Aorta (tissue), 5 donors: ENCODE measurements at regions of chr6 and their contacts with region 1.

Region 1: DNA sequence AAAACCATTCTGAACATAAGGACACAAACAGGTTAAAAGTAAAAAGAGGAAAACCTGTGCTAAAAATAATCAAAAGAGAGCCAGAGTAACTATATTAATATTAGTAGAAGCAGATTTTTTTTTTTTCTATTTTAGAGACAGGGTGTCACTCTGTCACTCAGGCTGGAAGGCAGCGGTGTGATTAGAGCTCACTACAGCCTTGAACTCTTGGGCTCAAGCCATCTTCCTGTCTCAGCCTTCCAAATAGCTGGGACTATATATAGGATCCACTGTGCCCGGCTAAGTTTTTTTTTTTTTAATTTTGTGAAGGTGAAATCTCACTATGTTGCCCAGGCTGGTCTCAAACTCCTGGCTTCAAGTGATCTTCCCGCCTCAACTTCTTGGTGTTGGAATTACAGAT is 33.4 kb upstream of the PLN start:
- DNase-seq: no peak
- ATAC-seq: peak; percentile 68
- H3K4me3 ChIP-seq: no peak overlapping the region
- H3K27ac ChIP-seq: peak overlapping the region in 1 of 2 donors; percentile 76
- H3K4me1 ChIP-seq: peaks cover 0 to 3% of the 10 kb centered on the region in 2 donors
- H3K27me3 ChIP-seq: no peaks in the 10 kb centered on the region

Region 2: DNA sequence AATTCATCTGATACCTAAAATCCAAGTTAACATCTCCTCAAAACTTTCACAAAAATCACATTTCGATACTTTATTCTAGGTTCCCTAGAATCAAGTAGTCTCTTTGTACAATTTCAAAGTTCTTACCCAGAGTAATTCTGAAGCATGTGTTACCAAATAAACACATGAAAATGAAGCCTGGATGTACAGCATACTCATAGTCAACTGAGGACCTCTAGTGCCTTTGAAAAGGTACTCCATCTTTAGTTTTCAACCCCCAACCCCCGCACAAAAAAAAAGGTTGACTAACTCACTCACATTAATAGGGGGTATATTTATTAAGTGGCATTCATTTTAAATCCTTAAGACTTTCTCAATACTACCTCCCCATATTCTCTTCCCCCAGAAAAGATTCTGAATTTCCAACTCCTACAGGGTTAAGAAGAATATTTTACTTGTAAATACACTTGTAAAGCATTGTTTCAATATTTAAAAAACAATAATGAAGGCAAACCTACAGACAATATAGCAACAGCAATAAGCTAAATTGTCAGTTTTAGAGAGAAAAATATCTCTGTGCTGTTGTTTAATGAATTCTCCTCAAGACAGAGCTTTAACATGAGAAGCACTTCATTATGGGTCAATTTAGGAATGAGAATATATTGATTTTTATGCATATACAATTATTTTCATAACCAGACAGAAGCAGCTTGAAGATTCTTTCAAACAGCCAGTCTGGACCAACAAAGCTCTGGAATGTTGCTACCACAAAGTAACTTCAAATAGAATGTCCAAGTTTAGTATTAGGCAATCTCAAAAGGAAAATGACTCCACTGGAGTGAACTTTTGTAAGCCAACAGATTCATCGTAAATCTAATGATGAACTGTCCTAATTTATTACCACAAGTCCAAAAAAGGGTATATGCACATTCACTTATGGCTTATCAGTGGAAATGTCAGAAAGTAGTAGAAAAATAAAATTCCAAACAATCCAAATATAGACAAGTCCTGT is 36.7 kb after region 1 on chr6:
- intact Hi-C with region 1: loop called (anchors 5 kb)
- DNase-seq: no peak
- ATAC-seq: peak; percentile 67
- H3K4me3 ChIP-seq: peak overlapping the region; percentile 93 to 98
- H3K27ac ChIP-seq: no peak overlapping the region
- H3K4me1 ChIP-seq: no peaks in the 10 kb centered on the region
- H3K27me3 ChIP-seq: no peaks in the 10 kb centered on the region

Region 3: GRCh38 chr6:118558464-118559217 is 44.0 kb after region 1 on chr6:
- intact Hi-C with region 1: loop called (anchors 5 kb)
- DNase-seq: no peak
- ATAC-seq: no peak
- H3K4me3 ChIP-seq: peak overlapping the region; percentile 8 to 34
- H3K27ac ChIP-seq: no peak overlapping the region
- H3K4me1 ChIP-seq: no peaks in the 10 kb centered on the region
- H3K27me3 ChIP-seq: no peaks in the 10 kb centered on the region

Region 4: GRCh38 chr6:118639054-118639964 is 124.6 kb after region 1 on chr6:
- intact Hi-C with region 1: no loop called
- DNase-seq: no peak
- ATAC-seq: no peak
- H3K4me3 ChIP-seq: no peak overlapping the region
- H3K27ac ChIP-seq: no peak overlapping the region
- H3K4me1 ChIP-seq: no peaks in the 10 kb centered on the region
- H3K27me3 ChIP-seq: no peaks in the 10 kb centered on the region